GM10248 (cell line): ENCODE measurements at regions of chr20 and their contacts with region 1.

Region 1: DNA sequence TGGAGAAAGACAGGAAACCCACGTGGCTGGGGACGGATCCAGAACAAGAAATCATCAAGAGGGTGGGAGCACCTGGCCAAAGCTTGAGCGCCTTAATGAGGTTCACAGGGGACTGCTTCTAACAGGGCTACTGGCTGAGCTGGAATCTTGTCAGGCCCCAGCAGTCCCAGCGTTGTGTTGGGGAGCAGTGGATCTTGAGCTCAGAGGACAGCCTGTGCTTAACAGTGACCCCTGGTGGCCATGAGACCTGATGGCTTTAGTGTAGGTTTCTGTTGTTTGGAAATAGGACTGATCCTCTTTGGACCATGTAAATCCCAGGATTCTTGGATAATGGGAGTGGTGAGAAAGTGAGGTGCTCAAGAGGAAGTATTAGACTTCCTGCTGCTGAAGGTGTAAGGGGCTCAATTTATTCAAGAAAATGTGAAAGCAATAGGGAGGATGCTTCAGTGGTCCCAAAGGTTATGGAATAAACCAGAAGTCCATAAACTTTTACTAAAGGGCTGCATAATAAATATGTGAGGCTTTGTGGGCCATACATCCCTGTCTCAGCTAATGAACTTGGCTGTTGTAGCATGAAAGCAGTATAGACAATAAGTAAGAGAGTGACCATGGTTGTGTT is 216.2 kb downstream of the NFATC2 start:
- DNase-seq: peak; percentile 40
- CTCF ChIP-seq: peak; percentile 53

Region 2: GRCh38 chr20:51284176-51284575 is 42.1 kb before region 1 on chr20:
- CTCF ChIA-PET with region 1: no interaction called
- POLR2A ChIA-PET with region 1: no interaction called
- DNase-seq: no peak
- CTCF ChIP-seq: no peak

Region 3: GRCh38 chr20:51306503-51307358 is 19.6 kb before region 1 on chr20:
- CTCF ChIA-PET with region 1: interaction called, 56 read pairs
- POLR2A ChIA-PET with region 1: no interaction called
- DNase-seq: peak; percentile 87
- CTCF ChIP-seq: peak; percentile 96

Region 4: DNA sequence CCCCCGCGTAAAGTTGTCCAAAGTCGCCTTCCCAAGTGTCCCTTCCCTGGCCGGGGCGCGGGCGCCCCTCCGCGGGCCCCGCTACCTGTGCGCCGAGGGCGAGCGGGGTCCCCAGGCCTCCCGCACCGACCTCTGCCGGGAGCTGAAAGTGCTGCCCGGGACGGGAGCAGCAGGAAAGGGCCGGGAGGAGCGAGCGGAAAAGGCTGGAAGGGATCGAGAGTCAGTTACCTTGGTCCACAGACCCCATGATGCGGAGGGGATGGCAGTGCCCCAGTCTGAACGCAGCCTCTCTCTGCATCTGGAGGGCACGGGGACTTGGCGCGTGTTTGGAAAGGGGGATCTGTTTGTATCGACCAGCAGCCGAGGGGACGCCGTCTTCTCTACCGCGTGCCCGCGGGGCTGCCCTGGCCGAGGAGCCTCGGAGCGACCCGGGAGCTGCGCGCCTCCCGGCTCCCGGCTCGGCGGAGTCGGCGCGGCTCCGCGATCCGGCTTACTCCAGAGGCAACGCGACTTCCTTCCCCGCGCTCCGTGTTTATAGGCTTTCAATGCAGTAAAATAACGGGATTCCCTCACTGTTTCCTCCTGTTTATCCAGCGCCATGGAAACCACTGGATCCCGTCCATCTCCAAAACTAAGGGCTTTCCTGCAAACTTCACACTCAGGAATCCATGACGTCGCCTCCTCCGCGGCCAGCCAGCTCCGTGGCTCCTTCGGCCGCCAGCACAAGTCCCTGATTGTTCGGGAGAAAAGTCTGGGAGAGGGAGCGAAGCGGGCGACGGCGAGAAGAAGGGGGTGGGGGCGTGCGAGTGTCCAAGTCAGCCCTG is 236.2 kb after region 1 on chr20:
- CTCF ChIA-PET with region 1: no interaction called
- POLR2A ChIA-PET with region 1: no interaction called
- DNase-seq: peak; percentile 36
- CTCF ChIP-seq: no peak